ENCODE measurements at regions of chr5 and their contacts with region 1.

Region 1: DNA sequence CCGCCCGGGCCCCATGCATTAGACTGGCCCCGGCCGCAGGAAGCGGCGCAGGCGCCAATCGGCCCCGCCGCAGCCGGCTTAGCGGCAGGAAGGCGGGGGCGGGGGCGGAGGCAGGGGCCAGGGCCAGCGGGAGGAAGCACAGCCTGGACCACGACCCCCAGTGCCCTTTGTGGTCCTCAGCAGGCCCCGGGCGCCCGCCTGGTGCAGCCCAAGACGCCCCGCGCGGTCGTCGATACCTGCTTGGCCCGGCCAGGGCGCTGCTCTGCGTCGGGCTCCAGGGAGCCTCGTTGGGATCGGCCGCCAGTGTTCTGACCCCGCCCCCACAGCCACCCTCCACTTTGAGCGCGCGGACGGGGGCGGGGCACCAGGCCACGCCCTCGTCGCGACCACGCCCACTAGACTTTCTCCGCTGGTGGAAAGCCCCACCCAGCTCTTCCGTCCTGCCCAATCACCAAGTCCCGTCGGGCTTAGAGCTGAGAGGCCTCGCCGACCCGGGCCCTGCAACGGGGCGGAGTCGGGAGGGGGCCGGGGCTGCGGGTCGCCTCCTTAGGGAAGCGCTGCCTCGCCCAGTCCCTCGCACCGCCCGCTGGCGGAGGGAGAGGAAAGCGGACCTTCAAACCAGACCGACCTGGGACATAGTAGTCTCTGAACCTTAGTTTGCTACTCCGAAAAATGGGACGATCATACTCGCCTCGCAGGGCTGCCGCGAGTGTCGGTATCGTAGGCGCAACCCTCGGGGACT is at the start of gene PDLIM7:
- DNase-seq: peak; percentile 96
- ATAC-seq: peak; percentile 90
- H3K4me3 Mint-ChIP-seq: peak within 1 kb of the TSS; percentile 82
- H3K27ac Mint-ChIP-seq: peak within 1 kb of the TSS; percentile 72
- H3K4me1 Mint-ChIP-seq: peaks cover 44% of the 10 kb centered on the region
- H3K27me3 Mint-ChIP-seq: peaks cover 21% of the 10 kb centered on the region
- total RNA-seq, gene PDLIM7: 72.9 to 81.2 TPM

Region 2: DNA sequence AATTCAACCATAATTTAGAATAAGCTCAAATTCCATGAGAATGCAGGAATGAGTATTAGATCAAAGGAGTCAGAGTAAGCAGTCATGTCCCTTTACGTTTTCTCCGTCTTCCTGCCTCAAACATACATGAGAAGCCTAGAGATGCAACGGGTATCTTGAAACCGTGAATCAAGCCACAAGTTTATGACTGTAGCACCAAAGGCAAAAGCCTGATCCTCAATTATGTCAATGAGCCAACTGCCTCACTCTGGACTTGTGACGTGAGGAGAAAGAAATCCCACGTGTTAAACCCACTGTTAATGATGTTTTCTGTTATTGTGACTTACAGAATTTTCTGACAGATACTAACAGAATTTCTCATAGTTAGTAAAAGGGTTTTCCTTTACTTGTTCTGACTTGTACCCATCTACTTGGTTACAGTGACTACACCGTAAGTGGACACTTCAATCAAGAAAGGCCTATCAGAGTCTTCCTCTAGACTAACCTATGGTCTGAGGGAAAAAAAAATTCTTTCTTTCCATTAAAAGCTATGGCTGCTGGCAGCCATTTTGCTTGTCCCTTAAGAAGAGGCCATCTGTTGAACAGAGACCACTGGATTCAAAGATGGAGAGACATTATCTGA is 563.0 kb before region 1 on chr5:
- CTCF ChIA-PET with region 1: no interaction called
- DNase-seq: no peak
- ATAC-seq: no peak
- H3K4me3 Mint-ChIP-seq: no peak overlapping the region
- H3K27ac Mint-ChIP-seq: no peak overlapping the region
- H3K4me1 Mint-ChIP-seq: peaks cover 9% of the 10 kb centered on the region
- H3K27me3 Mint-ChIP-seq: no peaks in the 10 kb centered on the region

Region 3: DNA sequence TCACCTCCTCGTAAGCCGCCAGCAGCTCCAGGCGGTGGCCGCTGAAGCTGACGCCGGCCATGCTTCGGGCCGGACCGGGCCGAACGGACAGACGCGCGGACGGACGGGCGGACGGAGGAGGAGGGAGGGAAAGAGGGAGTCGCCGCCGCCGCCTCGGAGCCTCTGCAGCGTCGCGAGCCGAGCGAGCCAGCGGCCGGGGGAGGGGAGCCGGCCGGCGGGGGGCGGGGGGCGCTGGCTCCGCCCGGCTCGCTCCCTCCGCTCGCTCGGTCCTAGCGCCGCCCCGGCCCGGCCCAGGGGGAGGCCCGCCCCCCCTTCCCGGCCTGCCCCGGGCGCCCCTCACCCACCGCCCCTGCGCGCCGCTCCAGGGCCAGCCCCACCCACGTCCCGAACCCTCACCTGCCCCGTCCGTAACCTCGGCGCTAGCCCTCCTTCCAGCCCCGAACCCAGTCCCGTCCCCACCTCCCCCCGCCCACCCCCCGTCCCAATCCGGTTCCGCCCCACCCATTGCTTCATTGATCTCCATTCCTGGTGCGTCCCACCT is 23.9 kb before region 1 on chr5 and contains the start of gene DBN1:
- CTCF ChIA-PET with region 1: interaction called, 136 read pairs
- DNase-seq: peak; percentile 59
- ATAC-seq: peak; percentile 35
- H3K4me3 Mint-ChIP-seq: peak within 1 kb of the TSS; percentile 77
- H3K27ac Mint-ChIP-seq: peak within 1 kb of the TSS; percentile 84
- H3K4me1 Mint-ChIP-seq: peaks cover 57% of the 10 kb centered on the region
- H3K27me3 Mint-ChIP-seq: no peaks in the 10 kb centered on the region
- total RNA-seq, gene DBN1: 81.5 to 128 TPM

Region 4: GRCh38 chr5:177509381-177509951 is 12.0 kb after region 1 on chr5 and contains the start of gene DOK3:
- CTCF ChIA-PET with region 1: interaction called, 20 read pairs
- DNase-seq: no peak
- ATAC-seq: no peak
- H3K4me3 Mint-ChIP-seq: no peak within 1 kb of the TSS
- H3K27ac Mint-ChIP-seq: peak within 1 kb of the TSS; percentile 38
- H3K4me1 Mint-ChIP-seq: peaks cover 2% of the 10 kb centered on the region
- H3K27me3 Mint-ChIP-seq: no peaks in the 10 kb centered on the region
- total RNA-seq, gene DOK3: 3.3 to 5.7 TPM

Region 5: GRCh38 chr5:177516604-177517568 is 19.4 kb after region 1 on chr5 and contains the start of gene DDX41:
- CTCF ChIA-PET with region 1: interaction called, 20 read pairs
- DNase-seq: peak; percentile 98
- ATAC-seq: peak; percentile 92
- H3K4me3 Mint-ChIP-seq: peak within 1 kb of the TSS; percentile 93
- H3K27ac Mint-ChIP-seq: peak within 1 kb of the TSS; percentile 85
- H3K4me1 Mint-ChIP-seq: peaks cover 55% of the 10 kb centered on the region
- H3K27me3 Mint-ChIP-seq: no peaks in the 10 kb centered on the region
- total RNA-seq, gene DDX41: 126 to 130 TPM

Region 6: GRCh38 chr5:177546258-177546741 is 48.8 kb after region 1 on chr5:
- CTCF ChIA-PET with region 1: no interaction called
- DNase-seq: no peak
- ATAC-seq: no peak
- H3K4me3 Mint-ChIP-seq: no peak overlapping the region
- H3K27ac Mint-ChIP-seq: no peak overlapping the region
- H3K4me1 Mint-ChIP-seq: no peaks in the 10 kb centered on the region
- H3K27me3 Mint-ChIP-seq: no peaks in the 10 kb centered on the region

Region 7: DNA sequence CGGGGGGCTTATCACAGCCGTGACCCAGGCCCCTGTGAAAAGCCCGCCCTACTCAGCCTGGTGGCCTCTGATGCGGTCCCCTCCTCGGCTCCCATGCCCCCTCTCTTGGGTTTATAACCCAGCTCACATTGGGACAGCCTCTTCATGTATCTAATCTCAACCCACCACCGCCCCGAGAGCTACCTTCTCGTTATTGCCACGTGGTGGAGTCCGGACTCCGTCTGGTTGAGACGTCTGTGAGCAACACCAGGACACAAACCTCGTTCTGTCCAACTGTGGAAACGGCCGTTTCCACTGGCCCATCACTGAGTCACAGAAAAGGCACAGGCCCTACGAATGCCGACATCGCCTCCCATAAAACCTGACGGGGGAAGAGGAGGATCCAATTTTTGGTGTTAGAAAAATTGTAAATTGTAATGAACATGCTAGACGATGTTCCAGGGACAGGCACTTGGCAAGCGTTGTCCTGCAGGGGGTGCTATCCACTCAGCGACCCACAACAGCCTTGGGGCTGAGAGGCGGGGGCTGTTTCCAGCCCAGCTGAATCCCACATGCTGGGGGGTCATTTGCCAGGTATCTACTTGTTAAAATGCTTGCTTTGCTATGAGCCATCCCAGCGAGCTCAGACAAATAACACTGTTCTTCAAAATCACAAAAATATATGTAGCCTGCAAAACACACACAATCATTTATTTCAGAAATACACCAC is 578.5 kb after region 1 on chr5:
- CTCF ChIA-PET with region 1: no interaction called
- DNase-seq: peak; percentile 82
- ATAC-seq: peak; percentile 90
- H3K4me3 Mint-ChIP-seq: no peak overlapping the region
- H3K27ac Mint-ChIP-seq: no peak overlapping the region
- H3K4me1 Mint-ChIP-seq: no peaks in the 10 kb centered on the region
- H3K27me3 Mint-ChIP-seq: peaks cover 7% of the 10 kb centered on the region

Measured in activated CD8-positive, alpha-beta memory T cell treated with anti-CD3 and anti-CD28 coated beads, Interleukin-2, amount 10 ng/mL, durations not matched to agents 7 days and 5 days (primary cell).